ENCODE measurements at regions of chr10 and their contacts with region 1.

Region 1: DNA sequence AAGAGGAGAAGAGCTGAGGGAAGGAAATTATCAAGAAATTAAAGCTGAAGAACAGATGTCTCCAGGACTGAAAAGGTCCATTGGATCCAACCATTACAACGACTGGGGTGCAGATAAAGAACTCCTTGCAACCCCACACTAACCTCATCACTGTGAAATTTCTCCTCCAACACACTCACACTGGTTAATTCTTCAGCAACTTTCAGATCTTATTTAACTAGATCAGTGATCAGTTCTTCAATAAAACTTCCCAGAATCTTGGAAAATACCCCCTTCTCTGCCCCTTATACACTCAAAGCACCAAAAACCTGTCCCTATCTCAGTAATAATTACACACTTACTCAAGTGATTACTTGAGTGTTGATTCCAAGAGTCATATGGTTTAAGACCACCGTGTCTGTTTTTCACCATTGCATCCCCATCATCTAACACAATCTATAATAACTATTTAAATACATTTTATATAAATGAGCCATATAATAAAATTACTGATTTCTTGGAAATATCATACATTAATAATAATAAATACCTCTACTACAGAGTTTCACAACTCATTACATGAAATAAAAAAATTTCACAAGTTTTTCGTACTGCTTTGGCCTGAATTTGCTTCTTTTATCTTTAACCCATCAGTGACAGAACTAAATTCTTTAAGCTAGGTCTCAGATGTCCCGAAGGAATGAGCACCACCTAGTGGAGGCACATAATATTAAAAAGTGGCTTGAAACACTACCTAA is 123.7 kb downstream of the MPP7 start:
- DNase-seq: peak; percentile 62
- ATAC-seq: peak; percentile 79
- H3K4me3 ChIP-seq: no peak overlapping the region
- H3K27ac ChIP-seq: no peak overlapping the region
- H3K4me1 ChIP-seq: 0 out of 2 replicates have a peak, but pooled peaks cover 2% of the 10 kb centered on the region
- H3K27me3 ChIP-seq: no peaks in the 10 kb centered on the region
- CTCF ChIP-seq: peak; percentile 80
- POLR2A ChIP-seq: 0 out of 2 replicates have a peak, but pooled peaks have one; percentile 30
- RAD21 ChIP-seq: peak; percentile 89

Region 2: GRCh38 chr10:27558612-27559020 is 620.6 kb before region 1 on chr10:
- CTCF ChIA-PET with region 1: no interaction called
- POLR2A ChIA-PET with region 1: no interaction called
- dilution Hi-C with region 1: no loop called
- in situ Hi-C with region 1: no loop called
- intact Hi-C with region 1: loop called (anchors 1 kb)
- DNase-seq: peak; percentile 55
- ATAC-seq: peak; percentile 91
- H3K4me3 ChIP-seq: no peak overlapping the region
- H3K27ac ChIP-seq: no peak overlapping the region
- H3K4me1 ChIP-seq: no peaks in the 10 kb centered on the region
- H3K27me3 ChIP-seq: no peaks in the 10 kb centered on the region
- CTCF ChIP-seq: peak; percentile 80
- POLR2A ChIP-seq: no peak
- RAD21 ChIP-seq: peak; percentile 83

Region 3: DNA sequence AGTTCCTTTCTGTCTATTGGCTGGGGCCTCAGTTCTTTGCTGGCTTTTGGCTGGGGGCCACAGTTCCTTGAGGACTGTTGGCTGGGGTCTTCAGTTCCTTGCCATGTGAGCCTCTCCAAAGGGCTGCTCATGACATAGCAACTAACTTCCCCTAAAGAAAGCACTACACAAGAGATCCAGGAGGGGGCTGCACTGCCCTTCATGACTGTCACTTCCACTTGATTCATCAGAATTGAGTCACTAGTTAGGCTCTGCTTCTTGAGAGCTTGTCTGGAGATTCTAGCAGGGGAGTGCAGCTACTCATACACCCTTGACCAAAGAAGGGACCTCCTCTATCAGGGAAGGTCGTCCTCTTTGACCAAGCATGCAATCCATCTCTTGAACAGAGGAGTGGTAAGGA is 395.5 kb before region 1 on chr10:
- CTCF ChIA-PET with region 1: no interaction called
- POLR2A ChIA-PET with region 1: no interaction called
- dilution Hi-C with region 1: no loop called
- in situ Hi-C with region 1: no loop called
- intact Hi-C with region 1: loop called (anchors 1 kb)
- DNase-seq: peak; percentile 62
- ATAC-seq: peak; percentile 89
- H3K4me3 ChIP-seq: no peak overlapping the region
- H3K27ac ChIP-seq: no peak overlapping the region
- H3K4me1 ChIP-seq: no peaks in the 10 kb centered on the region
- H3K27me3 ChIP-seq: no peaks in the 10 kb centered on the region
- CTCF ChIP-seq: peak; percentile 60
- POLR2A ChIP-seq: no peak
- RAD21 ChIP-seq: peak; percentile 73

Region 4: GRCh38 chr10:27998254-27999004 is 180.7 kb before region 1 on chr10:
- CTCF ChIA-PET with region 1: no interaction called
- POLR2A ChIA-PET with region 1: no interaction called
- dilution Hi-C with region 1: no loop called
- in situ Hi-C with region 1: no loop called
- intact Hi-C with region 1: loop called (anchors 5 kb)
- DNase-seq: peak; percentile 12
- ATAC-seq: peak; percentile 89
- H3K4me3 ChIP-seq: peak overlapping the region; percentile 83
- H3K27ac ChIP-seq: peak overlapping the region; percentile 67
- H3K4me1 ChIP-seq: peaks cover 1% of the 10 kb centered on the region; the same call in 1 of the 2 replicates
- H3K27me3 ChIP-seq: no peaks in the 10 kb centered on the region
- CTCF ChIP-seq: no peak
- POLR2A ChIP-seq: no peak
- RAD21 ChIP-seq: no peak